ENCODE measurements at regions of chr11 and their contacts with region 1.

Region 1: GRCh38 chr11:116276051-116277044 is 496.4 kb downstream of the BUD13 start:
- DNase-seq: peak; percentile 86 to 99
- H3K4me3 ChIP-seq: peak overlapping the region; percentile 21 to 84 (median 67); a peak in 7 of 8 replicates
- H3K27ac ChIP-seq: peak overlapping the region; percentile 46; the same call in 1 of the 2 replicates
- H3K4me1 ChIP-seq: no peaks in the 10 kb centered on the region; a peak in 1 of 7 replicates
- H3K27me3 ChIP-seq: no peaks in the 10 kb centered on the region; a peak in 1 of 7 replicates
- CTCF ChIP-seq: peak; percentile 79 to 97 (median 91)
- EP300 ChIP-seq: no peak
- POLR2A ChIP-seq: no peak
- RAD21 ChIP-seq: peak; percentile 85 to 90

Region 2: DNA sequence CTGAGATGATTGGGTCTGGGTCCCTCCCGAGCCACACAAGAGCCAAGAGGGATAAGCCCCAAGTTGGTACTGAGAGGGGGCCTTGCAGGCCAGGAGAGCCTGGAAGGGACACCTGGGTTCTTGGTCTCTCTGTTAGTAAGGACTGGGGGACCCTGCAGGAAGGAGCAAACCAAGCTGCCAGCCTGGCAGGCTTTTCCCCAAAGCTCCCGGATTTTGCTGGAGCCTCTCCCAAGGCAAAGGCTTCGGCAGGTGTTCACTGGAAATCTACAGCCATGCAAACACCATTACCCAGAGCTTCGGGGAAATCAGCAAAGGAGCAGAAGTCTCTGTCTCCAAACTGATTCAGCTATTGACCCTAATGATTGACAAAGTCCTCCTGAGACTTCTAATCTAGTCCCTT is 31.5 kb before region 1 on chr11:
- CTCF ChIA-PET with region 1: interaction called, 14 read pairs
- POLR2A ChIA-PET with region 1: no interaction called
- DNase-seq: no peak
- H3K4me3 ChIP-seq: no peak overlapping the region
- H3K27ac ChIP-seq: no peak overlapping the region
- H3K4me1 ChIP-seq: peaks cover 0 to 10% (median 2%) of the 10 kb centered on the region in 4 experiments; a peak in 3 of 7 replicates
- H3K27me3 ChIP-seq: no peaks in the 10 kb centered on the region
- CTCF ChIP-seq: no peak
- EP300 ChIP-seq: no peak
- POLR2A ChIP-seq: no peak
- RAD21 ChIP-seq: no peak

Region 3: DNA sequence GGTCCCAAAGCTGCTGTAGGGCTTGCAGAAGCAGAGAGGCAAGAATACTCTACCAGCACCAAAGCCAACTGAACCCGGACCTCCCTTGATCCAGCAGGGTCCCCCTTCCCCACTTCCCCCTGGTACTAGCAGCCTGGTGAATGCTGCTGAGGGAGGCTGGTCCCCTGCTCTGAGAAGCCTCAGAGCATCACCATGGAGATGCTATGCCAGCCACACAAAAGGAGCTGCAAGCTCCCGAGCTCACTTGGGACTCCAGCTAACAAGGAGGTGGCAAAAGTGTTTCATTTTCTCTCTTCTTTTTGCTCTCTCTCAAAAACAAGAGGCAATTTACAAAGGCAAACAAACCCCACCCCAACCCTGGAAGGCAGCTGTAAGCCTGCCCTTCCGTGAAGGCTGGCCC is 13.3 kb before region 1 on chr11:
- CTCF ChIA-PET with region 1: interaction called, 15 read pairs
- POLR2A ChIA-PET with region 1: no interaction called
- DNase-seq: no peak
- H3K4me3 ChIP-seq: no peak overlapping the region
- H3K27ac ChIP-seq: no peak overlapping the region
- H3K4me1 ChIP-seq: peaks cover 0 to 8% (median 4%) of the 10 kb centered on the region in 4 experiments; a peak in 4 of 7 replicates
- H3K27me3 ChIP-seq: 0 out of 7 replicates have a peak, but pooled peaks cover 0 to 2% (median 0%) of the 10 kb centered on the region in 4 experiments
- CTCF ChIP-seq: no peak
- EP300 ChIP-seq: no peak
- POLR2A ChIP-seq: no peak
- RAD21 ChIP-seq: no peak

Region 4: GRCh38 chr11:116333001-116333616 is 56.8 kb after region 1 on chr11:
- CTCF ChIA-PET with region 1: no interaction called
- POLR2A ChIA-PET with region 1: no interaction called
- DNase-seq: no peak
- H3K4me3 ChIP-seq: no peak overlapping the region
- H3K27ac ChIP-seq: no peak overlapping the region
- H3K4me1 ChIP-seq: peaks cover 0 to 4% (median 1%) of the 10 kb centered on the region in 4 experiments; a peak in 4 of 7 replicates
- H3K27me3 ChIP-seq: no peaks in the 10 kb centered on the region; a peak in 1 of 7 replicates
- CTCF ChIP-seq: no peak
- EP300 ChIP-seq: no peak
- POLR2A ChIP-seq: no peak
- RAD21 ChIP-seq: no peak

Region 5: DNA sequence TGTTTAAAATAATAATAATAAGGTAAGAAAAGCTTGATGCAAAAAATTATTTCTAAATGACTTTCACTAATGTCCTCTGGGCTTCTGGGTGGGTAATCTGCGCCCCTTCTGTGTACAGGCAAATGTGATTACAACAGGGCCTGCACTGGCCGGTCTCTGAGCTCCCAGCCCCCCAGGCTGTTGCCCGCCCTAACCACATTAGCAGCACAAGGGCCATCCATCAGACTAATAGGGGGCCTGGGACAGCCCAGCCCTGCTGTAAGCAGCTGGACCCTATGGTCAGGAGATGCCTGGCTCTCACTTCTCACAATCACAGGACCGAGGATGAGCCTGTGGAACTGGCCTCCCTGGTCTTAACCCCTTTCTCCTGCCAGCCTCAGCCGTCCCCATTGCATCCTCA is 108.1 kb after region 1 on chr11:
- CTCF ChIA-PET with region 1: no interaction called
- POLR2A ChIA-PET with region 1: no interaction called
- DNase-seq: no peak
- H3K4me3 ChIP-seq: no peak overlapping the region
- H3K27ac ChIP-seq: no peak overlapping the region
- H3K4me1 ChIP-seq: peaks cover 0 to 12% (median 5%) of the 10 kb centered on the region in 4 experiments; a peak in 4 of 7 replicates
- H3K27me3 ChIP-seq: no peaks in the 10 kb centered on the region
- CTCF ChIP-seq: no peak
- EP300 ChIP-seq: no peak
- POLR2A ChIP-seq: no peak
- RAD21 ChIP-seq: no peak